ENCODE measurements at regions of chr4 and their contacts with region 1.

Region 1: DNA sequence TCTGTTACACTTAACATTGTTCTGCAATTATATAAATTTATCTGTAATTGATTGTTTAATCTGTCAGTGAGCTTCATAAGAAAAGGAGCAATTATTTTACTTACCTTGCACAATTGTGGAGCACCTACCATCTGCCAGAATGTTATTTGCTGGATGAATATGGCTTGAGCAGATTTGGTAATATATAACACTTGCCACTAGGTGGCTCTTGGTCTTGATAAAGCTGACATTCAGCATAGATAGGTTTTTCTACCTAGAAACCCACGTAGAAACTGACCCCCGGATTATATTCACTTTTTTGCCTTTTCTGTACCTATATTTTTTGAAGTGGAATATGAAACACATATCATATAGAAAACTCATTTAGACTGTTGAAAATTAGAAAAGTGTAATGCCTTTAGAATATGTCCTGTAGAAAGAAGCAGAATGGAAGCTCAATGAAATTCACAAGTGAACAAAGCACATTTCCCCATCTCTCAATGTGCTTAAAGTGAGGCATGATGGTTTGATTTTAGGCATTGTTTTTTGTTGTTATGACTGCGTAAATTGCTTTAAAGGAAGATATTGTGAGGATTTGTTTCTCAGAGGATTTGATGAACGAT is 9.5 kb downstream of the RBPJ start:
- DNase-seq: no peak
- H3K4me3 ChIP-seq: no peak overlapping the region
- H3K27ac ChIP-seq: no peak overlapping the region
- H3K4me1 ChIP-seq: peaks cover 14 to 43% (median 33%) of the 10 kb centered on the region in 4 donors
- H3K27me3 ChIP-seq: no peaks in the 10 kb centered on the region
- CTCF ChIP-seq: peak; percentile 62 to 70 (median 63)
- EP300 ChIP-seq: no peak
- POLR2A ChIP-seq: no peak

Region 2: DNA sequence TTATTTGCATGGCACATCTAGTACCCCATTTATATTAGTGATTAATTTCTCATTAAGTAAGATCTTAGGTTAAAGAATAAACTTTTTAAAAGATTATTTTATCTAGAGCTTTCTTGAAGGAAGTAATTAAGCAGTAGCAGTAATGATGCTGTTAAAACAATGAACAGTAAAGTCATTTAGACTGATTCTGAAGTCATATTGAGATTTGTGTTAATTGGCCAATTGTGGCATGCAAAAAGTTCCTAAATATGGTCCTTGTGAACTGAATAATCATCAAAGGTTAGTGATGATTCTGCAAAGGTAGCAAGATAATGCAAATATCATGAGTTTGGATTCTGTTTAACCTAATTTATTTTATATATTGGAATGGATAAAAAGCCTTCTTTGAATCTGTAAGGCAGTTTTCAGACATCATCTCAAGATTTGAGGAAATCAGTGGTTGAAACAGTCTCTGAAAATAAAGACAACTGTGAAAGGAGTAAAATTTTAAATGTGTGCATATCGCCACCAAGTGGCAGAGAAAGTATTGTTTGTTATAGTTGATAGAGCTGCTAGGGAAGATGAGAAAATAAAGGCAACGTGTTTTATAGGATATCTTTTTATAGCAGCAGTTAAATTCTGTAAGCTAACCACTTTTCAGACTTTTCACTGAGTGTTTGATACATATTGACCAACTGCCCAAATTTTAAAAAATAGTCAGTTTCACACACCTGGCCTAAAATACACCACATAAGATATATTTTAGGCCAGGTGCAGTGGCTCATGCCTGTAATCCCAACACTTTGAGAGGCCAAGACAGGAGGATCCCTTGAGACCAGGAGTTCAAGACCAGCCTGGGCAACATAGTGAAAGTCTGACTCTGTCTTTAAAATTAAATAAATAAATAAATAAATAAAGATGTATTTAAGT is 80.4 kb after region 1 on chr4:
- intact Hi-C with region 1: loop called (anchors 2 kb)
- DNase-seq: no peak
- H3K4me3 ChIP-seq: no peak overlapping the region
- H3K27ac ChIP-seq: no peak overlapping the region
- H3K4me1 ChIP-seq: peaks cover 12 to 39% (median 28%) of the 10 kb centered on the region in 4 donors
- H3K27me3 ChIP-seq: no peaks in the 10 kb centered on the region
- CTCF ChIP-seq: peak; percentile 61 to 66 (median 65)
- EP300 ChIP-seq: no peak
- POLR2A ChIP-seq: no peak

Measured in esophagus muscularis mucosa (tissue), 4 donors.